ENCODE measurements at regions of chr11 and their contacts with region 1.

Region 1: DNA sequence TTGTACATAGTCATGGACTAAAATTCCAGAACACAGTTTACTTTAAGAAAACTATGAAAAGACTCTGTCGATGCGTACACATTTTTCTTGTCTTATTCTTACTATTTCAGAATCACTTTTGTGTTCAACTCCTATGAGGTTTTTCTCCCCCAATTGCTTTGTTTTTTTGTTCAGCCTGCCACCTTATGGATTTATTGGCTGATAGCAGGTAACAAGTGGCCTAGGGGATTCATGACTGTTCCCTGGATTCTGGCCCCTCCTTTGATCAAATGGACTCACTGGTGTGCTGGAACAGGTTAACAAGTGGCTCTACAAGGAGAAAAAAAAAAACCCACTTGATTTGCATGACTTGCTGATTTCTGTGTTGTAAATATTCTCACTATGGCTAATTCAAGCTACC is 10.6 kb downstream of the MMP20 start:
- DNase-seq: no peak
- ATAC-seq: no peak
- H3K4me3 ChIP-seq: no peak overlapping the region
- H3K27ac ChIP-seq: no peak overlapping the region
- H3K4me1 ChIP-seq: peaks cover 41% of the 10 kb centered on the region
- H3K27me3 ChIP-seq: no peaks in the 10 kb centered on the region
- CTCF ChIP-seq: peak; percentile 23; the same call in 1 of the 2 replicates
- EP300 ChIP-seq: no peak
- POLR2A ChIP-seq: no peak
- RAD21 ChIP-seq: no peak

Region 2: DNA sequence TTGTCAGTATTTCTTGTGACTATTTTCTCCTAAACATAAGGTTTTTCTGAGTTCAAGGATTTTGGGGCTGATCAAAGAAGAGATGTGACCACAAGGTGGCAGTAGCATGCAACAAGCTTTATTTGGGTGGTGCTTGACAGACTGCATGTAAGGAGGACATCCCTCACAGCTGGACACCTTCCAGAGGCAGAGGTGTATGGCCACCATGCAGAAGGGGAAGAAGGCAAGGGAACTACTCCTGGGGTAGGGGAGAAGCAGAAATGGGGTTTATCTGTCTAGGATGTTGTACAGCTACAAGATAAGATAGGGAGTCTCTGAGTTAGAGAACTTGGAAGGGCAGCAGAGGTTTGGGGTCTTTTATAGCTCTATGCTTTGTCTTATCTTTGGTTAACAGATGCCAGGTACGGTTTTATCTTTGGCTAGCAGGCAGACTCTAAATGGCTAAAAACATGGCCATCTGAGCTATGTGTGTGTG is 272.6 kb before region 1 on chr11:
- CTCF ChIA-PET with region 1: interaction called, 4 read pairs
- POLR2A ChIA-PET with region 1: no interaction called
- in situ Hi-C with region 1: loop called (anchors 5 kb)
- intact Hi-C with region 1: loop called (anchors 1 kb)
- DNase-seq: peak; percentile 78
- ATAC-seq: peak; percentile 86
- H3K4me3 ChIP-seq: no peak overlapping the region
- H3K27ac ChIP-seq: no peak overlapping the region
- H3K4me1 ChIP-seq: peaks cover 30% of the 10 kb centered on the region
- H3K27me3 ChIP-seq: no peaks in the 10 kb centered on the region; a peak in 1 of 5 replicates
- CTCF ChIP-seq: peak; percentile 92
- EP300 ChIP-seq: no peak
- POLR2A ChIP-seq: no peak
- RAD21 ChIP-seq: peak; percentile 65

Region 3: DNA sequence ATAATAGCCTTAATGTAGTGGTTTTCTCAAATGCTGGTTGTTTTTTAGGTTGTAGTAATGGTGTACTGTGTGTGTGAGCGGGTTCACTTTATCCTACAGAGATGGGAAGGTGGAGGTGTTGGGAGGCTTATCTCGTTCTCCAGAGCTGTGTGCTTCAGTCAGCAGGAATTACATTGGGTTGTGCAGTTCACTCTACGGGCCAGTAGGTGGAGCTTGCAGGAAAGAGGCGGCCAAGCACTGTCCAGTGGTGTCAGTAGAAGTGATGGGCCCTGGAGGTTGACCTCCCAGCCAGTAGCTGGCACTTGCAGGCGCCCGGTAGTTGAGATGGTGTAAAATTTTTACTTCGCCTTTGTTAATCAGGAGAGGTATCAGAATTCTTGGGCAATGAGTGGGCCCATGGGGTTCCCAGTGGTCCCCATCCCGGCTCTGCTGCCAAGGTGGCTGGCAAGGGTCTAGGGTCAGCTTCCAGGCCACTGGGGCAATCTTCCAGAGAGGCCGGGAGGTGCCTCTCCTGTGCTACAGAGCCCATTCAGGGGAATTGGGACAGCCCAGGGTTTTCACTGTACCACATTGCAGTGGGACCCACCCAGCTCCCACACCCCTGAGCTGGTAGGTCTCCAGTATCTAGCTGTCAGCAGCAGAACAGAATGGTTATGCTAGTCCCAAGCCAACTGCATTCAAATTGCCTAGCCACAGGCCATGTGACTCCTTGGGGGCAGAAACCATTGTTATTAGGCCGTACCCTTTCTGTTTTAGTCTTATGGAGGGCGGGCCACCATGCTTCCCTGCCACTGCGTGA is 223.6 kb before region 1 on chr11:
- CTCF ChIA-PET with region 1: no interaction called
- POLR2A ChIA-PET with region 1: no interaction called
- in situ Hi-C with region 1: no loop called
- intact Hi-C with region 1: loop called (anchors 2 kb)
- DNase-seq: peak; percentile 70
- ATAC-seq: peak; percentile 84
- H3K4me3 ChIP-seq: no peak overlapping the region
- H3K27ac ChIP-seq: no peak overlapping the region
- H3K4me1 ChIP-seq: no peaks in the 10 kb centered on the region; the same call in 1 of the 2 replicates
- H3K27me3 ChIP-seq: no peaks in the 10 kb centered on the region
- CTCF ChIP-seq: peak; percentile 92
- EP300 ChIP-seq: no peak
- POLR2A ChIP-seq: no peak
- RAD21 ChIP-seq: peak; percentile 78

Region 4: GRCh38 chr11:102592634-102593581 is 21.6 kb before region 1 on chr11:
- CTCF ChIA-PET with region 1: interaction called, 24 read pairs
- POLR2A ChIA-PET with region 1: no interaction called
- in situ Hi-C with region 1: no loop called
- intact Hi-C with region 1: loop called (anchors 1 kb)
- DNase-seq: peak; percentile 65
- ATAC-seq: peak; percentile 91
- H3K4me3 ChIP-seq: no peak overlapping the region
- H3K27ac ChIP-seq: no peak overlapping the region
- H3K4me1 ChIP-seq: peaks cover 17% of the 10 kb centered on the region
- H3K27me3 ChIP-seq: no peaks in the 10 kb centered on the region
- CTCF ChIP-seq: peak; percentile 74
- EP300 ChIP-seq: no peak
- POLR2A ChIP-seq: no peak
- RAD21 ChIP-seq: no peak

Region 5: GRCh38 chr11:102666331-102666957 is 52.0 kb after region 1 on chr11:
- CTCF ChIA-PET with region 1: no interaction called
- POLR2A ChIA-PET with region 1: no interaction called
- in situ Hi-C with region 1: no loop called
- intact Hi-C with region 1: loop called (anchors 1 kb)
- DNase-seq: peak; percentile 46
- ATAC-seq: peak; percentile 82
- H3K4me3 ChIP-seq: no peak overlapping the region
- H3K27ac ChIP-seq: no peak overlapping the region
- H3K4me1 ChIP-seq: peaks cover 7% of the 10 kb centered on the region; the same call in 1 of the 2 replicates
- H3K27me3 ChIP-seq: no peaks in the 10 kb centered on the region; a peak in 1 of 5 replicates
- CTCF ChIP-seq: peak; percentile 81
- EP300 ChIP-seq: no peak
- POLR2A ChIP-seq: no peak
- RAD21 ChIP-seq: peak; percentile 60; the same call in 1 of the 2 replicates